Right cardiac atrium (tissue), 5 donors: ENCODE measurements at regions of chr4 and their contacts with region 1.

Region 1: DNA sequence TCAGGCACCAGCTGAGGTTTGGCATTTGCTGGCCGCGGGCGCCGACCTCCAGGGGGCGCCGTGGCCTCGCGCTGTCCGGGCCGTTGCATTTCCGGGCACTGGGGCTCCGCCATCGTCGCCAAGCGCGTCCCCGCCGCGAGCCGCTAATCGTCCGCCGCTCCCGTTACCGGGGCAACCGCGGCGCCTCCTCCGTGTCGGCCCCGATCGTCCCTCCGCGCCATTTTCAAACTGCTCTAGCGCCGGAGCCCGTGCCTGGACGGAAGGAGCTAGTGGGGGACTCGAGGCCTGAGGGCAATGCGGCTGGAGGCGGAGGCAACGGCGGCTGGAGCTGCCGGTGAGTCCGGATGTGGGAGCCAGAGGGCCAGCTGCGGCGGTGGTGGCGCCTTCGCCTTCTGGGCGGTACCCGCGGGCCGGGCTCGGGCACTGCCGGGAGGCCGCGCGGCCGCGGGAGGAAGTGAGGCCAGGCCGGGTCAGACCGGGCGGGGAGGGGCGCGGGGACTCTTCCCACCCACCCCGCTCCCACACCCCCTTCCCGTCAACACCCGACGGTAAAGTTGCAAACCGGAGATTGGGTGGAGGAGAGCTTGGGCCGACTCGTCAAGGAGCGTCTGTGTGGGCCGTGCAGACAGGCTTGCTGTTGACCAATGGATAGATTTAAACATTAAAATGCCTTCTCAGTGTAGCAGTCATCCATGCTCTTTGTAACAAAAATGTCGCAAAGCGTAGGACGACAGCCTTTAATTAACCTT is at the start of gene CEP135:
- DNase-seq: peak; percentile 96 to 99 (median 98)
- ATAC-seq: peak; percentile 98
- H3K4me3 ChIP-seq: peak within 1 kb of the TSS; percentile 56
- H3K27ac ChIP-seq: peak within 1 kb of the TSS; percentile 78
- H3K4me1 ChIP-seq: peaks cover 4% of the 10 kb centered on the region
- H3K27me3 ChIP-seq: no peaks in the 10 kb centered on the region
- total RNA-seq, gene CEP135: 2.1 to 3.0 (median 2.7) TPM

Region 2: GRCh38 chr4:55608591-55608990 is 340.3 kb before region 1 on chr4:
- intact Hi-C with region 1: no loop called
- DNase-seq: no peak
- ATAC-seq: no peak
- H3K4me3 ChIP-seq: no peak overlapping the region
- H3K27ac ChIP-seq: no peak overlapping the region
- H3K4me1 ChIP-seq: no peaks in the 10 kb centered on the region
- H3K27me3 ChIP-seq: no peaks in the 10 kb centered on the region

Region 3: GRCh38 chr4:56301181-56302076 is 352.5 kb after region 1 on chr4:
- intact Hi-C with region 1: loop called (anchors 2 to 5 kb)
- DNase-seq: peak; percentile 42 to 86 (median 80)
- ATAC-seq: peak; percentile 95
- H3K4me3 ChIP-seq: no peak overlapping the region
- H3K27ac ChIP-seq: no peak overlapping the region
- H3K4me1 ChIP-seq: no peaks in the 10 kb centered on the region
- H3K27me3 ChIP-seq: no peaks in the 10 kb centered on the region